ENCODE measurements at regions of chr20 and their contacts with region 1.

Region 1: GRCh38 chr20:44137210-44137801 is 49.7 kb downstream of the JPH2 start:
- DNase-seq: no peak
- H3K4me3 Mint-ChIP-seq: no peak overlapping the region
- H3K27ac Mint-ChIP-seq: no peak overlapping the region
- H3K4me1 Mint-ChIP-seq: no peaks in the 10 kb centered on the region
- H3K27me3 Mint-ChIP-seq: peaks cover 16% of the 10 kb centered on the region

Region 2: GRCh38 chr20:44193801-44194200 is 56.5 kb after region 1 on chr20:
- intact Hi-C with region 1: loop called (anchors 5 kb)
- DNase-seq: no peak
- H3K4me3 Mint-ChIP-seq: no peak overlapping the region
- H3K27ac Mint-ChIP-seq: no peak overlapping the region
- H3K4me1 Mint-ChIP-seq: peaks cover 5% of the 10 kb centered on the region
- H3K27me3 Mint-ChIP-seq: peaks cover 12% of the 10 kb centered on the region

Measured in activated CD4-positive, alpha-beta T cell treated with anti-CD3 and anti-CD28 coated beads, Interleukin-2, amount 10 ng/mL, durations not matched to agents 24 days and 14 days (primary cell).